Dorsolateral prefrontal cortex (tissue), 120 donors: ENCODE measurements at regions of chr15 and their contacts with region 1.

Region 1: DNA sequence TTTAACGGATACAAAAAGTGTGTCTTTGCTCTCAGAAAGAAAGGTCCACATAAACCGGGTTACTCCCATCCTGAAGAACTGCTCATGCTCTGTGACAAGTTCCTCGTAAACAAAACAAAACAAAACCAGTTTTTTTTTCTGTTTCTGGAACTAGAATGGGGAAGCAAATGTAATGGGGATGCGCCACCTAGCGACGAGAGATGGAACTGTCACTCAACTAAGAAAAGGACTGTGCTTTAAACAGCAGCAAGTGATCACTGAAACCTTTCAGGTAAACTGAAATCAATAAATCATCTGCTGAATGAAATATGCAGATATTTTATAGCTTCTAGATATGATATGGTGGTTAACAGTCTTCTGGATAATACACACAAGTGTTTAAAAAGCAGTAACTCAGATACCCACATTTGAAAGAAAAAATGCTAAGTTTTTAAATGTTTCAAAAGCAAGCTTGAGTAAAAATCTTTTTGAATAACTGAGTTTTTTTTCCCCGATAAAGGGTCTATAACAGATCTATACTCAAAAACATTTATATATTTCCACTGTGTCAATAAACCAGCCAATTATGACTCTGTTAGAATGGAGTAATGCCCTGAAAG is 10.9 kb downstream of the TM2D3 start:
- DNase-seq: peak in 9 of 10 donors; percentile 64 to 90 (median 75)
- H3K4me3 ChIP-seq: peak overlapping the region in 37 of 59 donors; percentile 1 to 52 (median 21)
- H3K27ac ChIP-seq: peak overlapping the region; percentile 67 to 98 (median 92)
- H3K27me3 ChIP-seq: no peaks in the 10 kb centered on the region
- CTCF ChIP-seq: peak; percentile 86 to 100 (median 98)

Region 2: DNA sequence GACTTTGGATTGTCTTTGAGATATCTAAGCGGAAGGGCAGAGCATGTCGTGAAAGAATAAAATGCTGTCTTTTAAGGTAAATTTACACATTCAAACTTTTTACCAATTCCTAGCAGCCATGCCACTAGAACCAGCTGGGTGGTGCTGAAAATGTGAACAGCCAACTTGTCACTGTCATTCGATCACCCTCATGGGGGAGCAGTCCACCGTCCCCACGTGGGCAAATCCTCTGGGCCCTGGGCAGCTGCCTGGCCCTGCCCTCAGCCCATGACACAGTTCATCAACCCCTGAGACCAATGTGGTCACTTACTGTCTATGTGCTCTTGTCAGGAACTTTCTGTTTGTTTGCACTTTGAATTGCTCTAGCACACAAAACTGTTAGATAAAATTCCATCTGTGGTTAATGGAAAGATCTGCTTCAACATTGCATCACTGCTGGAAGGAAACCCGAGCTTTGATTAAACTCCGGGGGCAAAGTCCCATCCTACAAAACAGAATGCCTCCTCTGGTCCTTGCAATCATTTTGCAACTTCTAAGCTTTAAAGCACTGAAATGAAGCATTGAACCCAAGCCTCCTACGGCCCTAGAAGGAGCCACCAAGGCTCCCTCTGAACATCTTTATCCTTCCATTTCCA is 201.9 kb before region 1 on chr15:
- intact Hi-C with region 1: loop called in 1 of 2 experiments (anchors 5 kb)
- DNase-seq: peak in 1 of 10 donors; percentile 22
- H3K4me3 ChIP-seq: peak overlapping the region in 6 of 59 donors; percentile 1 to 50 (median 18)
- H3K27ac ChIP-seq: peak overlapping the region in 51 of 59 donors; percentile 3 to 92 (median 71)
- H3K27me3 ChIP-seq: peaks cover 0 to 5% (median 0%) of the 10 kb centered on the region in 45 donors
- CTCF ChIP-seq: peak in 1 of 56 donors; percentile 29

Region 3: GRCh38 chr15:101489236-101489632 is 152.0 kb before region 1 on chr15:
- intact Hi-C with region 1: loop called (anchors 2 to 10 kb)
- DNase-seq: peak in 1 of 10 donors; percentile 16
- H3K4me3 ChIP-seq: peak overlapping the region in 45 of 59 donors; percentile 28 to 72 (median 57)
- H3K27ac ChIP-seq: peak overlapping the region in 9 of 59 donors; percentile 35 to 89 (median 79)
- H3K27me3 ChIP-seq: peaks cover 0 to 17% (median 3%) of the 10 kb centered on the region in 45 donors
- CTCF ChIP-seq: peak in 1 of 56 donors; percentile 10

Region 4: GRCh38 chr15:101523560-101523940 is 117.7 kb before region 1 on chr15:
- intact Hi-C with region 1: loop called (anchors 2 to 5 kb)
- DNase-seq: peak in 9 of 10 donors; percentile 74 to 95 (median 89)
- H3K4me3 ChIP-seq: no peak overlapping the region
- H3K27ac ChIP-seq: peak overlapping the region in 58 of 59 donors; percentile 79 to 100 (median 95)
- H3K27me3 ChIP-seq: peaks cover 0 to 12% (median 0%) of the 10 kb centered on the region in 45 donors
- CTCF ChIP-seq: peak in 50 of 56 donors; percentile 16 to 75 (median 48)